Mucosa of descending colon (tissue), 3 donors: ENCODE measurements at regions of chr14 and their contacts with region 1.

Region 1: GRCh38 chr14:39174560-39175444 is at the start of gene PNN:
- DNase-seq: peak; percentile 96 to 97 (median 96)
- ATAC-seq: peak; percentile 93
- H3K4me3 ChIP-seq: peak within 1 kb of the TSS; percentile 72
- H3K4me1 ChIP-seq: peaks cover 10% of the 10 kb centered on the region
- CTCF ChIP-seq: no peak
- total RNA-seq, gene PNN: 42.5 to 50.6 (median 49.4) TPM

Region 2: DNA sequence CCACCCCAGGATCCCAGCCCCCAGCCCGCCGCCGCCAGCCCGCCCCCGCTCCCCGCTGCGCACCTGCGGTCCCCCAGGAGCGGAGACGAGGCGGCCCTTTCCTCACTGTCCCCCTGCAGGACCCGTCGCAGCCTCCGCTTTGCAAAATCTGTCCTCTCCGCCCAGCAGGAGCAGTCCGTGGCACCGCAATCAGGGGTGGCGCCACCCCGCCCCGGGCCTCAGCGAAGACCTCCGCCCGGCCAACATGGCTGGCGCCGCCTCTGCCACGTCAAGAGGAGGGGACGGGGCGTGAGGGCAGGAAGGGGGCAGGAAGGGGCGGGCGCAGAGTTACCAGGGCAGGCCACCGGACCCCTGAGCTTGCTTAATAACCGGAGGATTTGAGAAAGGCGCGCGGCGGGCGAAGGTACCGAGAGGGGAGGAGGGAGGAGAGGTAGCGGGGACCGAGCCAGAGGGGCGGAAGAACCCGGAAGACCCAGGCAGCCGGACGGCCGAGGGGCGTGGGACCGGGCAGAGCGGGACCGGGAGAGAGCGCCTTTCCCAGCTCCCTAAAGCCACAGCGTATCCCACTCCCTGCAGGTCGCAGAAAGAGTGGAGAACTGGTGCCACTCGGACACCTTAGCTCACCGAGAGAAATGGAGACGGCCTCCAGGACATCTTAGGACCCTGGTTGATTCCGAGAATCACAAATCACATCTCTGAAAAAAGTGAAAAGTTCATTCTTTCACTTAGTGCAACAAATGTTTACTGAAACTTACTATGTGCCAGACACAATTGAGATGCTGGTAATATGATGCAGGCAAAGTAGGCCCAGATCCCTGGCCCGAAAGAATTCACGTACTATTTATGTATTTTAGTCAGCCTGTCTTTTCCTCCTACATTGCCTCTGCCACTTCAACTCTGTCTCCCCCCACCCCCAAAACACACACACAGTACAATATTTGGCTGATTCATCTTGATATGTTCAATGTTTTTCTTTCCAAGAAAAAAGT is 71.5 kb before region 1 on chr14 and contains the start of gene SEC23A:
- intact Hi-C with region 1: loop called in 1 of 2 experiments (anchors 10 kb)
- DNase-seq: peak; percentile 94 to 96 (median 95)
- ATAC-seq: peak; percentile 96
- H3K4me3 ChIP-seq: peak within 1 kb of the TSS; percentile 78
- H3K4me1 ChIP-seq: peaks cover 33% of the 10 kb centered on the region
- CTCF ChIP-seq: no peak
- total RNA-seq, gene SEC23A: 84.4 to 148 (median 122) TPM

Region 3: DNA sequence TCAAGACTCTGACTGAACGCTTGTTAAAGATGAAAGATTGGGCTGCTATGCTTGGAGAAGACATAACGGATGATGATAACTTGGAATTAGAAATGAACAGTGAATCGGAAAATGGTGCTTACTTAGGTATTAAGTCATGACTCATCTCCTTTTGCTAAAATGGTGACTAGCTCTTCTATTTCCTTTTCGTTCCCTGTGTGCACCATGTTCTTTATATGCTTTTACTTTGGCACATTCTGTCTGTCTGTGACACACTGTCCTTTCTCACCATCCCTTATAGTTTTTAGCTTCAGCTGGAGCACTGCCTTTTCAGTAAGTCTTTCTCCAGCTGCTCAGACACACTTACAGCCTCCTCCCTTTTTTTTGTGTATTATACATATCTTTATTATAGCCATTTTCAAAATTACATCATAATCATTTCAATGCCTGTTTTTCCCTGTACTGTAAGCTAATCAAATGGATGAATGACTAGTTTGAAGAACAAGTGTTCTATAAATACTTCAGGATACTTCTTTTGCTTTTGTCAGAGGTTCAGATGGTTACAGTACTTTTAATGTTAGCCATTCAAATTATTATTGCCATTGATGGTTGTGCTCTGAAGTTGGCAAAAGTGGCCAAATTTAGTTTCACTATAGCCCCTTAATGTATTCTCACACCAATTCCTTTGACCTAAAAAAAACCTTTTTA is 127.5 kb after region 1 on chr14:
- intact Hi-C with region 1: no loop called
- DNase-seq: no peak
- ATAC-seq: no peak
- H3K4me3 ChIP-seq: no peak overlapping the region
- H3K4me1 ChIP-seq: no peaks in the 10 kb centered on the region
- CTCF ChIP-seq: no peak

Region 4: DNA sequence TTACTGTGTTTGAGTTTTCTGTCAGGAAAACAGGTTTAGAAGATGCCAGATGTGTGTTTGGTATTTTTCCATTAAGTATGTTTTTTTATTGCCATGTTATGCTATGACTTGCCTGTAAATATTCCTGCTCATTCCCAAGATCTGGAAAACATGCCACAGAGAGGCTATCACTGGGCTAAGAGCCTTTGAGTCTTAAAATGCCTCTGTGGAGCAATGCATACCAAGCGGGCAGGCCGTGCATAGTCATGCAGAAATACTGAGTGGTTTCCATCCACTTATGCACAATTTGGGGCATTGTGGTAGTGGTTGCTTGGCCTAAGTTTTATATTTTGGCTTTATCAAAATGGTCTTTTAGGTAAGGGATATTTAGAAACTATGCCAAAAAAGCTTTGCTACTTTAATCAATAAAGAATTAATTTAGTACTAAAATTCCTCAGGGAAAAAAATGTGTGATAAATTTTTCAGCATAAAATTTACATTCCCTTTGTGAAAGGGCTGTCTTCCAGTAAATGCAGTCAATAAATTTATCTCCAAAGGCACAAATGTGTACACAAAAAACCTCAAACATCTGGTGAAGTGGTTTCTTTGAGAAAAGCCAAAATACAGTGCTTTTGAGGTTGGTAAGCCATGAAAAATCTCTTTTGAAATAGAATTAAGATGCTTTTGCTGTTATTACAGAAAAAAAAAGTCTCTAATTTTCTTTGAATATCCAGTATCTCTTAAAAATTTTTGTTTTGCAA is 598.8 kb after region 1 on chr14:
- intact Hi-C with region 1: no loop called
- DNase-seq: no peak
- ATAC-seq: no peak
- H3K4me3 ChIP-seq: no peak overlapping the region
- H3K4me1 ChIP-seq: no peaks in the 10 kb centered on the region
- CTCF ChIP-seq: no peak